Common myeloid progenitor, CD34-positive (primary cell): ENCODE measurements at regions of chr1 and their contacts with region 1.

Region 1: GRCh38 chr1:27603681-27604578 is at the start of gene AHDC1:
- DNase-seq: peak; percentile 91 to 95 (median 92)
- H3K4me3 ChIP-seq: peak within 1 kb of the TSS; percentile 74 to 89 (median 83)
- H3K27ac ChIP-seq: peak within 1 kb of the TSS in 1 of 2 experiments; percentile 79
- H3K4me1 ChIP-seq: peaks cover 3 to 83% (median 71%) of the 10 kb centered on the region in 4 experiments
- H3K27me3 ChIP-seq: no peaks in the 10 kb centered on the region

Region 2: GRCh38 chr1:27402349-27402754 is 201.6 kb before region 1 on chr1:
- CTCF ChIA-PET with region 1: interaction called, 49 read pairs
- POLR2A ChIA-PET with region 1: no interaction called
- DNase-seq: peak in 2 of 3 donors; percentile 63 to 67
- H3K4me3 ChIP-seq: peak overlapping the region in 2 of 7 experiments; percentile 32 to 58
- H3K27ac ChIP-seq: peak overlapping the region in 1 of 2 experiments; percentile 25
- H3K4me1 ChIP-seq: peaks cover 12 to 60% (median 58%) of the 10 kb centered on the region in 4 experiments
- H3K27me3 ChIP-seq: no peaks in the 10 kb centered on the region

Region 3: GRCh38 chr1:27568300-27569087 is 35.4 kb before region 1 on chr1:
- CTCF ChIA-PET with region 1: interaction called, 117 read pairs
- POLR2A ChIA-PET with region 1: interaction called, 5 read pairs
- DNase-seq: peak; percentile 93 to 95 (median 94)
- H3K4me3 ChIP-seq: peak overlapping the region in 5 of 7 experiments; percentile 27 to 70 (median 36)
- H3K27ac ChIP-seq: peak overlapping the region in 1 of 2 experiments; percentile 56
- H3K4me1 ChIP-seq: peaks cover 3 to 98% (median 76%) of the 10 kb centered on the region in 4 experiments
- H3K27me3 ChIP-seq: no peaks in the 10 kb centered on the region

Region 4: DNA sequence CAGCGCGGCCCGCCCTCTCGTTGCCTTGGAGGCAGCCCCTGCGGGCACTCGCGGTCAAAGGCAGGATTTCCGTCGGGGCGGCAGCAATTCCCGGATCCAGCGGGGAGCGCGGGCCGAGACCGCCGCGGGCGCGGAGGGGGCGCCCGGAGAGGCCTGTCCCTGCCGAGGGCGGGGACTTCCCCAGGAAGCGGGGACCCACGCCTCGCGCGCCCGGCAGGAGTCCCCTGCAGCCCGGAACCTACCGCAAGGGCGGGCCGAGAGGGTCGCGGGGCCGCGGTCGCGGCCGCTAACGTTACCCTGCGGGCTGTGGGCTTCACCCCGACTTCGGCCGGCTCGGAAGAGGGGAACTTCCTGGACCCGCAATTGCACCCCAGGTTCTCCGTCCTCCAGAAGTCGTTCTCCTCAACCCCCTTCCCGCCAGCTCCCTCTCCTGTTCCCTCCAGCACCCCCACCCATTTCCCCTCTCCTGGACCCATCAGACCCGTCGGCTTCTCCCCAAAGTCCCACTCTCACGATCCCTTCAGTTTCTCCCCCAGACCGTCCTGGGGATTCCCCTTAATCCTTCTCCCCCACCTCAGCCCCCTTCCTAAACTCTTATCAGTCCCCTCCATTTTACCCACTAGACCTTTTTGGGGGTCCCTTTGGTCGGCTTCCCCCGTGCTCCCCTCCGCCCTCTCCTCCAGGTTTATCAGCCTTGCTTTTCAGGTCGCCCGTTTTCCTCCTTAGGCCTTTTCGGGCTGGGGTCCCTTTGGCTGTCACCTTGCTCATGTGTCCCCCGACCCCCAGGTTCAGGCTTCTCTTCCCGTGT is 30.5 kb after region 1 on chr1:
- CTCF ChIA-PET with region 1: interaction called, 297 read pairs
- POLR2A ChIA-PET with region 1: no interaction called
- DNase-seq: peak; percentile 56 to 85 (median 80)
- H3K4me3 ChIP-seq: peak overlapping the region; percentile 28 to 80 (median 67)
- H3K27ac ChIP-seq: peak overlapping the region in 1 of 2 experiments; percentile 67
- H3K4me1 ChIP-seq: peaks cover 18 to 71% (median 67%) of the 10 kb centered on the region in 4 experiments
- H3K27me3 ChIP-seq: no peaks in the 10 kb centered on the region

Region 5: DNA sequence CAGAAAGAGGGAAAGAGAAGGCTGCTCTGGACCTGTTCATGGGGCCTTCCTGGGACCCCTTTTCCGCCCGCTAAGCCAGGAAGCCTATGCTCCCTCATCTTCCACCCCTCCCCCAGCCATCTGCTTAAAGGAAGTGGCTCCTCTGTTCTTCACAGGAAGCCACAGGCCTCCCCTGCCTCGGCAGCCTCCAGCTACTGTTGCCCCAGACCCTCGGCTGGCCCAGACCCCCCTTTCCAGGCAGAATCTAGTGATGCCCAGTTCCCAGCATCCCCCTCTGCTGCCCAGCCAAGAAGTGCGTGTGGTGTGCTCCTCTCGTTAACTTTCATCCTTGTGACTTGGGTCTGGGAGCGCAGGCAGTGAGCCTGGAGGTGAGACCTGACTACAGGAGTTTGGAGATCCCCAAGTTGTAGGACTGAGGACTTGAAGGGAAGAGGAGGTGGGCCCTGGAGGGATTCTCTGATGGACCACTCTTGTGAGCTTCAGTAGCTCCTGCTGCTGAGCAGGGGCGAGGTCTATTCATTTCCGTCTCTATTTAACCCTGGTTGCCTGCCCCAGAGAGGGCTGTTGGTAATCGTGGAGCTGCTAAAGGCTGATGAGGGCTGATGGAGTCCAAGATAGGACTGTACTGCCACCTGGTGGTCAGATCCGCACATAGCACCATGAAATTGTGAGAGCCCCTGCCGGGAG is 58.9 kb after region 1 on chr1:
- CTCF ChIA-PET with region 1: interaction called, 311 read pairs
- POLR2A ChIA-PET with region 1: interaction called, 5 read pairs
- DNase-seq: peak; percentile 88 to 93 (median 90)
- H3K4me3 ChIP-seq: peak overlapping the region in 4 of 7 experiments; percentile 33 to 52 (median 41)
- H3K27ac ChIP-seq: peak overlapping the region in 1 of 2 experiments; percentile 66
- H3K4me1 ChIP-seq: peaks cover 14 to 54% (median 30%) of the 10 kb centered on the region in 4 experiments
- H3K27me3 ChIP-seq: no peaks in the 10 kb centered on the region

Region 6: GRCh38 chr1:28139025-28139712 is 535.2 kb after region 1 on chr1:
- CTCF ChIA-PET with region 1: no interaction called
- POLR2A ChIA-PET with region 1: no interaction called
- DNase-seq: peak in 2 of 3 donors; percentile 71
- H3K4me3 ChIP-seq: no peak overlapping the region
- H3K27ac ChIP-seq: no peak overlapping the region
- H3K4me1 ChIP-seq: peaks cover 2 to 35% (median 9%) of the 10 kb centered on the region in 4 experiments
- H3K27me3 ChIP-seq: no peaks in the 10 kb centered on the region